Cardiac septum (tissue), 1 donor: ENCODE measurements at regions of chr3 and their contacts with region 1.

Region 1: GRCh38 chr3:155870133-155870944 is at the start of gene GMPS:
- DNase-seq: peak; percentile 98
- total RNA-seq, gene GMPS: 27.7 TPM

Region 2: DNA sequence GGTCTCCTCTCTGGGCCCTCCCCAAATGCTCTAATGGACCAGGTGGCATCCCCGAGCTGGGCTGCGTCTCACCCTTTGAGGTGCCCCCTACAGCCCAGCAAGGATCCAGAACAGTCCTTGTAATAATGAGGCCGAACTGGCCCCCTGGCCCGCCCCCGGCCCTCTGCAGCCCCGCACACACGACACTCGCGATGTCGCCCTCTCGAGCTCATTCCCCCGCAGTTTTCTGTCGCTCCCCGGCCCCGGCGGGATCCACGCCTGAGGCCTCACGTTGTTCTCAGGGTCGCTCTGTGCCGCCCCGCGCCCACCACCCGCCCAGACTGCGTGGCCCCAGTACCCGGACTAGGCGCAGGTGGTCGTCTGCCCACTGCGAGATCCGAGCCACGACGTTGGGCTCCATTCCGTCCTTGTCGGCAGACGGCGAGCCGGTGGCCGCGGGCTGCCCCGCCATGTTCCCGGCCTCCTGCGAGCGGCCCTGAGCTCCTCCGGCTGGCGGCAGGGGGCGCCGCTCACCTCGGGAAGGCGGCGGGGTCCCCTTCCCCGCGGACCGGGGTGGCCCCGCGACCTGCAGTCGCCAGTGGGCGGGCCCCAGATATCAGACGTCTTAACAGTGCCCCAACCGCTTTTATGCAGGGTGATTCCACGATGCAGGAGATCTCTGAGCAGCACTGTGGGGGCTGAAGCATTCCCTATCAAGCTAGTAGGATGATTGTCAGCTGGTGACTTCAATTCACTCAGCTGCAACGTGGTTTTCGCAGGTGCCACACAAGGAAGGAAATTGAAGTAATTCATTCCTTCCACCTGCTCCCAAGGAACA is 64.3 kb before region 1 on chr3 and contains the start of gene C3orf33:
- intact Hi-C with region 1: loop called (anchors 5 kb)
- DNase-seq: peak; percentile 89
- total RNA-seq, gene C3orf33: 7.2 TPM